MCF 10A (cell line): ENCODE measurements at regions of chr20 and their contacts with region 1.

Region 1: DNA sequence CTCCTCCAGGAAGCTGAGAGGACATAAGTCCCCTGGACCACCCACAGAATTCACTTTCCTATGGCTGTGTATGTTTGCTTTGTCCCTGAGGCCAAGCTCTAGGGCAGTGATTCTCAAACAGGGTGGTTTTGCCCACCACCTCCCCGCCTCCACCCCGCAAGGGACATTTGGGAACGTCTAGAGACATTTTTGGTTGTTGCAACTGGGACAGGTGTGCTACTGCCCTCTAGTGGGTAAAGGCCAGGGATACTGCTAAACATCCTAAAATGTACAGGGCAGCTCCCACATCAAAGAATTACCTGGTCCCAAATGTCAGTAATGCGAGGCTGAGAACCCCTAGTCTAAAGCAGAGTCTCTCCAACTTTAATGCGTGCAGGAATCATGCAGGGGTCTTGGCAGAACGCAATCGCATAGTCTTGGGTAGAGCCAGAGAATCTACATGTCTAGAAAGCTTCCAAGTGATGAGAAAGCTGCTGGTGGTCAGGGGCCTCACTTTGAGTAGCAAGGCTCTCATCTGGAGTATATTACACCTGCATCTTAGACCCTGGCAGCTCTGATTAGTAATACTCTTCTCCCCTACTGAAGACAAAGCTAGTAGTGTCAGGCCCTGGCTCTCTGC is 5.1 kb downstream of the KCNS1 start:
- DNase-seq: peak; percentile 76
- H3K4me3 Mint-ChIP-seq: no peak overlapping the region
- H3K27ac Mint-ChIP-seq: no peak overlapping the region
- H3K4me1 Mint-ChIP-seq: no peaks in the 10 kb centered on the region
- H3K27me3 Mint-ChIP-seq: no peaks in the 10 kb centered on the region
- CTCF ChIP-seq: peak; percentile 72

Region 2: DNA sequence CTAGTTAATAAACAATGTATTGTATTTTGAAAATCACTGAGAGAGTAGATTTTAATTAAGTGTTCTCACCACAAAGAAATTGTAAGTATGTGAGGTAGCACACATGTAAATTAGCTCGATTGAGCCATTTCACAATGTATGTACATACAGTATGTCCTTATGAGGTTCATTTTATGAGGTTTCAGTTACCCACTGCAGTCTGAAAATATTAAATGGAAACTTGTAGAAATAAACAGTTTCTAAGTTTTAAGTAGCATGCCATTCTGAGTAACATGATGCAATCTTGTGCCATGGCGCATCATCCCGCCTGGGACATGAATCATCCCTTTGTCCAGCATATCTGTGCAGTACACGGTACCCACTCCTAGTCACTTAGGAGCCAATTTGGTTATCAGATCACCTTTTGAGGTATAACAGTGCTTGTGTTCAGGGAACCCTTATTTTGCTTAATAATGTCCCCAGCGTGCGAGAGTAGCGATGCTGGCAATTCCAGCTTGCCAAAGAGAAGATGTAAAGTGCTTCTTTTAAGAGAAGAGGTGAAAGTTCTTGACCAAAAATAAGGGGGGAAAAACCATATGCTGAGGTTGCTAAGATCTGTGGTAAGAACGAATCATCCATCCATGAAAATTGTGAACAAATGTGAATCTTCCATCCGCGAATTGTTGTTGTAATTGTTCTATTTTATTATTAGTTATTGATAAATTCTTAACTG is 59.7 kb before region 1 on chr20:
- CTCF ChIA-PET with region 1: interaction called, 17 read pairs
- POLR2A ChIA-PET with region 1: interaction called, 11 read pairs
- intact Hi-C with region 1: no loop called
- DNase-seq: peak; percentile 85
- H3K4me3 Mint-ChIP-seq: peak overlapping the region; percentile 60
- H3K27ac Mint-ChIP-seq: peak overlapping the region; percentile 95
- H3K4me1 Mint-ChIP-seq: peaks cover 57% of the 10 kb centered on the region
- H3K27me3 Mint-ChIP-seq: no peaks in the 10 kb centered on the region
- CTCF ChIP-seq: no peak

Region 3: DNA sequence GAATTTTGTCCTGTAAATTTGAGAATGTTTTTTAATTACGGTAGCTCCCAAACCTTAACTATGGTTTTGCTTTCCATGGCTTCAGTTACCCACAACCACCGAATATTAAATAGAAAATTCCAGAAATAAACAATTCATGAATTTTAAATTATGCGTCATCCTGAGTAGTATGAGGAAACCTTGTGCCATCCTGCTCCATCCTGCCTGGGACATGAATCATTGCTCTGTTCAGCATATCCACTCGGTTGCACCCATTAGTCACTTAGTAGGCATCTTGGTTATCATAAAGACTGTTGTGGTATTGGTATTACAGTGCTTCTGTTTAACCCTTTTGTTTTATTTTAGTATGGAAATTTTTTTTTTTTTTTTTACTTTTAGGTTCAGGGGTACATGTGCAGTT is 34.6 kb before region 1 on chr20:
- CTCF ChIA-PET with region 1: interaction called, 11 read pairs
- POLR2A ChIA-PET with region 1: no interaction called
- intact Hi-C with region 1: no loop called
- DNase-seq: peak; percentile 92
- H3K4me3 Mint-ChIP-seq: no peak overlapping the region
- H3K27ac Mint-ChIP-seq: peak overlapping the region; percentile 85
- H3K4me1 Mint-ChIP-seq: peaks cover 39% of the 10 kb centered on the region
- H3K27me3 Mint-ChIP-seq: no peaks in the 10 kb centered on the region
- CTCF ChIP-seq: no peak

Region 4: DNA sequence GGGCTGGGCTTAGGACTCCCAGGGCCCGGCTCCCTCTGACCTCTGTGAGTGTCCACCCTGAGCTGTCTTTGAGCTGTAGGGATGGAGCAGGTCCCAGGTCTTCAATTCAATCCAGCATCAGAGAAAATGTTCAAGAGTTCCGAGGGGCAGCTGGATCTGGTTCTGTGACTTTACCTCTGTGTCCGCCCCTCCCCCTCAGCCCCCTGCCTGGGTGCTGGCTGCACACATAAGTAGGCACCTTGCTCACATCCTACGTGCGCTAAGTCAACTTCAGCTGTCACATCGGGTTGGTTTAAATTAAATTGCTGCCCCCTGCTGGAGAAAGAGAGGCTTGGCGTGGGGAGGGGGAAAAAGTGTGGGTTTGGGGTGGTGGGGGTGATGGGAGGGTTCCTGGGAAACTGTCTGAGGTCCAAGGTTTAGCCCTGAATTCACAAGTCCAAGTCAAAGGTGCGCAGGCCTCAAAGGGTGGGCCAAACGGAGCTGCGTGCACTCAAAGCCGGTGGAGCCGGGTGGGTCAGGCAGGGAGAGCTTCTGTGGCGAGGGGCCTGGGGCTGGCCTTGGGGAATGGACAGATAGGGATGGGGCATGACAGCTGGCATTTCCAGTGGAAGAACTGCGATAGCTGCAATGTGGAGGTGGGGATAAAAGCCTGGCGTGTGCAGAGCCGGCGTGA is 16.1 kb after region 1 on chr20:
- CTCF ChIA-PET with region 1: interaction called, 211 read pairs
- POLR2A ChIA-PET with region 1: interaction called, 3 read pairs
- intact Hi-C with region 1: no loop called
- DNase-seq: peak; percentile 50
- H3K4me3 Mint-ChIP-seq: no peak overlapping the region
- H3K27ac Mint-ChIP-seq: no peak overlapping the region
- H3K4me1 Mint-ChIP-seq: no peaks in the 10 kb centered on the region
- H3K27me3 Mint-ChIP-seq: peaks cover 10% of the 10 kb centered on the region
- CTCF ChIP-seq: peak; percentile 64

Region 5: DNA sequence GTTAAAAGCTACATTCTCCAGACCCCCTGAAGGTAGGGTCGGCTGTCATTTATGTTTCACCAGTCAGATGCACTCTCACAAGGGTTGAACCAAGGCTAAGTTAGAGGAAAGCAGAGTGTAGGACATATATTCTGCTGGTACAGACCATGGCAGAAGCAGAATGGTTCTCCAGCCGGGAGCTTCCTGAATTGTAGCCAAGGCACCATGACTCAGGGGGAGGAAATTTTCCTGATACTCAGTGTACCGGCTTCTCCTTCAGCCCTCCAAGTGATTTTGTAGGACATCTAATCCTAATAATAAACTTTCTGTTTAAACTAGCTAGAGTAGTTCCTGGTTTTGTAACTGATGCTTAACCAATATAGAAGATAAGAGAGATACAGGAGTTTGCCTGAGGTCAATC is 172.7 kb after region 1 on chr20:
- CTCF ChIA-PET with region 1: interaction called, 10 read pairs
- POLR2A ChIA-PET with region 1: interaction called, 4 read pairs
- intact Hi-C with region 1: no loop called
- DNase-seq: no peak
- H3K4me3 Mint-ChIP-seq: no peak overlapping the region
- H3K27ac Mint-ChIP-seq: no peak overlapping the region
- H3K4me1 Mint-ChIP-seq: peaks cover 7% of the 10 kb centered on the region
- H3K27me3 Mint-ChIP-seq: no peaks in the 10 kb centered on the region
- CTCF ChIP-seq: no peak